ENCODE measurements at regions of chr5 and their contacts with region 1.

Region 1: GRCh38 chr5:32232441-32233219 is 58.5 kb upstream of the GOLPH3 start:
- DNase-seq: peak; percentile 61 to 73
- ATAC-seq: peak; percentile 84 to 94
- H3K4me3 ChIP-seq: no peak overlapping the region
- H3K27ac ChIP-seq: peak overlapping the region; percentile 66 to 79
- H3K4me1 ChIP-seq: peaks cover 39% of the 10 kb centered on the region
- CTCF ChIP-seq: peak; percentile 85
- EP300 ChIP-seq: no peak
- POLR2A ChIP-seq: no peak
- RAD21 ChIP-seq: peak; percentile 81 to 86

Region 2: DNA sequence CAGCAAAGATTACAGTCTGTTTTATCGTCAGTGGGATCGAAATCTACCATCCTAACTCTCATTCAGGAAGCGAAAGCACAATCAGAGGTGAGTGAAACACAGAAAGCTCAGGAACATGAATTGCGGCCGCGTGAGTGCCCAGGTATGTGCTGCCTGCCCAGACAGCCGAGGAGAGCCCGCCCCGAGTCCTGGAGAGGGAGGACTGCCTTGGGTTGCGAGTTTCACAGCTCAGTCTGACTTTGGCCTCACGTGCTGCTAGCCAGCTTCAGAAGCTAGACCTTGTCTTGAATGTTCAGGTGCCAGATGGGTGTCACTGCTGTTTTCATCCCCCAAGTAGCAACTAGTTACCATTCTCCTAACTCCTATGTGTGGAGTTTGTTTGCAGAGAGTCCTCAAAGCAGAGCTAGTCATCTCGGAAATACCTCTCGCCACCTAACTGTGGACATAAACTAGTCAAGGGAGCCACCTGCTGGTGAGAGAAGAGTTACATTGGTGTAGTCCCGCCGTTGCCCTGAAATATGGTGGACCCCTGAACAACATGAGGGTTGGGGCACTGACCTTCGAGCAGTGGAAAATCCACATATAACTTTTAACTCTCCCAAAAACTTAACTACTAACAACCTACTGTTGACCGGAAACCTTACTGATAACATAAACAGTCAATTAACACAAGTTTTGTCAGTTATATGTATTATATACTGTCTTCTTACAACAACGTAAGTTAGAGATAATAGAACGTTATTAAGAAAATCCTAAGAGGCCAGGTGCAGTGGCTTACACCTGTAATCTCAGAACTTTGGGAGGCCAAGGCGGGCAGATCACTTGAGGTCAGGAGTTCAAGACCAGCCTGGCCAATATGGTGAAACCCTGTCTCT is 139.5 kb before region 1 on chr5:
- CTCF ChIA-PET with region 1: no interaction called
- POLR2A ChIA-PET with region 1: no interaction called
- DNase-seq: peak; percentile 77 to 78
- ATAC-seq: peak; percentile 96
- H3K4me3 ChIP-seq: no peak overlapping the region
- H3K27ac ChIP-seq: no peak overlapping the region
- H3K4me1 ChIP-seq: 0 out of 3 replicates have a peak, but pooled peaks cover 3% of the 10 kb centered on the region
- CTCF ChIP-seq: peak; percentile 88
- EP300 ChIP-seq: no peak
- POLR2A ChIP-seq: no peak
- RAD21 ChIP-seq: peak; percentile 90 to 94

Region 3: GRCh38 chr5:32115985-32116384 is 116.6 kb before region 1 on chr5:
- CTCF ChIA-PET with region 1: no interaction called
- POLR2A ChIA-PET with region 1: no interaction called
- DNase-seq: peak; percentile 15 to 22
- ATAC-seq: peak; percentile 74 to 75
- H3K4me3 ChIP-seq: no peak overlapping the region
- H3K27ac ChIP-seq: no peak overlapping the region
- H3K4me1 ChIP-seq: no peaks in the 10 kb centered on the region
- CTCF ChIP-seq: no peak
- EP300 ChIP-seq: no peak
- POLR2A ChIP-seq: no peak
- RAD21 ChIP-seq: no peak

Region 4: DNA sequence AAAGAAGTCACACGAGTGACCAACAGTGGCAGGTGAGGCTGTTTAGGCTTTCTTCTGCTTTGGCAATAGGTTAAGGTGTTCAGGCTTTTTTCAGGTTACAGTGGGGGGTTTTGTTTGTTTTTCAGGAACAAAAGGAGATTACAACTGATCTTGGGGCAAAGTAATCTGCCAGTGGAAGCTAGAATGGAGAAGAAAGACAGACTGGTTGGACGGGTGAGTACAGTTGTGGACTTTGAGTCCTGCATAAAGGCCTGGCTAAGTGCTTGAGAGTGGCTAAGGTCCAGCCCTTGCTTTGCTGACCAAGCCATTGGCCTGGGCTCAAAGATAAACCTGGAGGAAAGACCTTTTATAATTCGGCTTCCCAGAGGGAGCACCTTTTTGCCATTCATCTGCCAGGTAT is 17.0 kb after region 1 on chr5:
- CTCF ChIA-PET with region 1: interaction called, 28 read pairs
- POLR2A ChIA-PET with region 1: no interaction called
- DNase-seq: no peak
- ATAC-seq: no peak
- H3K4me3 ChIP-seq: no peak overlapping the region
- H3K27ac ChIP-seq: no peak overlapping the region
- H3K4me1 ChIP-seq: no peaks in the 10 kb centered on the region
- CTCF ChIP-seq: no peak
- EP300 ChIP-seq: no peak
- POLR2A ChIP-seq: no peak
- RAD21 ChIP-seq: no peak

Region 5: DNA sequence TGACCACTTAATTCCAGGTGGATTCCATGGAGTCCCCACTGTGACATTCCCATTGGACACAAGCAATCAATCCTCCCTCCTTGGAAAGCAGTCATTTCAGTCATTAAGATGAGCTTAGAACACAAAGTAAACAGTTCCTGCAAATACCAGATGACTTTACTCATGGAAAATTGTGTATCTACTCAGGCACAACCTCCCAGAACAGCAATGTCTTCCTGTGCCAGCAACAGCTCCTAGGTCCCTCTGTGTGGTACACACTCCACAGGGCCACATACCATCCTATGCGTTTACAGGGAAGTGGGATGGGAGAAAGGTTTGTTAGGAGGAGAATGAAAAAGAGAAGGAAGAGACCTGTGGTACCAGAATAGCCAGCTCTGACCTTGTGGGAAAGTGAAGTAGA is 26.4 kb after region 1 on chr5:
- CTCF ChIA-PET with region 1: interaction called, 12 read pairs
- POLR2A ChIA-PET with region 1: no interaction called
- DNase-seq: no peak
- ATAC-seq: no peak; a peak in 1 of 6 replicates
- H3K4me3 ChIP-seq: no peak overlapping the region
- H3K27ac ChIP-seq: no peak overlapping the region
- H3K4me1 ChIP-seq: no peaks in the 10 kb centered on the region
- CTCF ChIP-seq: no peak
- EP300 ChIP-seq: no peak
- POLR2A ChIP-seq: no peak
- RAD21 ChIP-seq: no peak

Region 6: DNA sequence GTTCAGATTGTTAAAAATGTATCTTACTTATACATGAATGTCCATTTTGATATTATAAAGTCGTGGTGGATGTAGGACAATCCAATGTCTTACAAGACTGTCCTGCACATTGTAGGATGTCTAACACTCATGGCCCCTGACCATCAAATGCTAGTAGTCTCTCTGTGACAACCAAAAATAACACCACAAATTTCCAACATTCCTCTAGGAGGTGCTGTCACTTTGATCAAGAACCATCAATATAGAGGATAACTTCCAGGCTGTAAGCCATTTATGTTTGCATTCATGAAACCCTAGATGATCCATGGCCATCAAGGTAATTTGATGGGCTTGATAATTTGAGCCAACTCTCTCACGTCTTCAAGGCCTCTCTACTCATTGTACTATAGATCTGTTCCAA is 232.4 kb after region 1 on chr5:
- CTCF ChIA-PET with region 1: no interaction called
- POLR2A ChIA-PET with region 1: no interaction called
- DNase-seq: no peak
- ATAC-seq: no peak
- H3K4me3 ChIP-seq: no peak overlapping the region
- H3K27ac ChIP-seq: no peak overlapping the region
- H3K4me1 ChIP-seq: no peaks in the 10 kb centered on the region
- CTCF ChIP-seq: no peak
- EP300 ChIP-seq: no peak
- POLR2A ChIP-seq: no peak
- RAD21 ChIP-seq: no peak

Measured in A549 (cell line).